Endothelial cell of umbilical vein (primary cell): ENCODE measurements at regions of chr15 and their contacts with region 1.

Region 1: DNA sequence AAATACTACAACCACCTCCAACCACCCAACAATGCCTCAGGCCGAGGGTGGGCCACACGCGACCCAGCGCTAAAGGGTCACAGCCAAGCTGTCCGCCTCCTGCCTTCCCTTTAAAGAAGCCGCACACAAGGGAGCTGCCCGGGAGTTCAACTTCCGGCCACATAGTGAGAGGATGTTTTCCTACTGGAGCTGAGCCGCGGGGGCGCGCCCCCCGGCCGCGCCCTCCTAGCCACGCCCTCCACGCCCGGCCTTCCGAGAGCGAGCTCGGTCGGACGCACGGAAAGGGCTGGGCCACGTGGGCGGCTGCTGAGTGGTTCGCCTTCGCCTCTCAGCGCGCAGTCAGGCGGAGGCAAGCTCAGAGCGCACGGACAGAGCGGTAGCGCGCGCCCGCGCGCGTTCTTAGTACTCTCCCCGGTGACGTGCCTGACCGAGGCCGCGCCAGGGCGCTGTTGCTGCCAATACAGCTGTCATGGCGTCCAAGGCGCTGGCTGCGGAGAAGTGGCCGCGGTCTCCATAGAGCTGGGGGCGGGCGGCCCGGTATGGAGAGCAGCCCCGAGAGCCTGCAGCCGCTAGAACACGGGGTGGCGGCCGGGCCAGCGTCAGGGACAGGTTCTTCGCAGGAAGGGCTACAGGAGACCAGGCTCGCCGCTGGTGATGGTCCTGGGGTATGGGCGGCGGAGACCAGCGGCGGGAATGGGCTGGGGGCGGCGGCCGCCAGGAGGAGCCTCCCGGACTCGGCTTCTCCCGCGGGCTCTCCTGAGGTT is at the start of gene MINDY2:
- DNase-seq: peak; percentile 99
- H3K4me3 ChIP-seq: peak within 1 kb of the TSS; percentile 62 to 82 (median 65)
- H3K27ac ChIP-seq: peak within 1 kb of the TSS; percentile 81
- H3K4me1 ChIP-seq: peaks cover 23% of the 10 kb centered on the region
- H3K27me3 ChIP-seq: no peaks in the 10 kb centered on the region
- CTCF ChIP-seq: peak; percentile 12 to 44
- POLR2A ChIP-seq: peak; percentile 71
- total RNA-seq, gene MINDY2: 11.4 and 13.7 TPM in 2 replicates

Region 2: DNA sequence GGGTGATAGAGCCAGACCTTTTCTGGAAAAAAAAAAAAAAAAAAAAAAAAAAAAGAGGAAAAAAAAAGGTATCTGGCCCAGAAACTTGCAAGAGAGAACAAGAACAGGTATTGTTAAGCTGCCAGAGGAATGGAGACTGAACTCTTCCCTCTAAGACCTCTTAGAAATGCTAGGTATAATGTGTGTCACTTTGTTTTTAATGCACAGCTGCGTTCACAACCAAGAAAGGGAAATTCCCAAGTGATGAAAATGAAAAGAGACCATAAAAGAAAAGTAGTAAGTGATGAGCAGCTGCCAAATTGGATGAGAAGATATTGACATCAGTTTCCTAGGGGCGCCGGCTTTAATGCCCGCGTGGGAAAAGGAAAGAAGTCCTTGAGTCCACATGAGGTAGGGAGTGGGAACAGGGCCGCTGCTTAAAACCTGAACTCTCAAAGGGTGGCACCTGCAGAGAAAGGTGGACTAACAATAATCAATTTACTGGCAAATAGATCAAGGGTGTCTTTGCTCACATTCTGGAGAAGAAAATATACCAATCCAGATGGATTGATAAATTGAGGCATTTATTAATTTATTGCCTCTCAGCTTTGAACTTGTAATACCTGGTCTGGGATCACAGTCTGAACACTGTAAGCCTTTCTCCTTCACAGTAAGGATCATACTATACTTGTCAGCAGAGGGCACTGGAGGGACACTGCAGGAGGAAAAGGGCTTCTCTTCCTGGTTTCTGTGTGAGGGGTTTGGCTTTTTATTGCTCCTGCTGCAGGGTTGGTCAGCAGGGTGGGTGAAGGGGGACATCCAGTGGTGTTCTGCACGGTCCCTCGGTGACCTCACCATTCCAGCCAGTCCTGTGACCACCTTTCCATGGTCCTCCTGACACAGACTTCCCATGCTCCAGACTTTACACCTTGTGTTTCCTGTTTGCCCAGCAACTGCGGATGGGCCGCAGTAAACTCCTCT is 501.3 kb before region 1 on chr15:
- CTCF ChIA-PET with region 1: interaction called, 11 read pairs
- POLR2A ChIA-PET with region 1: no interaction called
- dilution Hi-C with region 1: no loop called
- intact Hi-C with region 1: loop called (anchors 5 kb)
- DNase-seq: peak; percentile 56
- H3K4me3 ChIP-seq: no peak overlapping the region
- H3K27ac ChIP-seq: no peak overlapping the region
- H3K4me1 ChIP-seq: no peaks in the 10 kb centered on the region
- H3K27me3 ChIP-seq: peaks cover 0 to under 1% of the 10 kb centered on the region in 2 experiments
- CTCF ChIP-seq: peak; percentile 48 to 60
- POLR2A ChIP-seq: no peak

Region 3: DNA sequence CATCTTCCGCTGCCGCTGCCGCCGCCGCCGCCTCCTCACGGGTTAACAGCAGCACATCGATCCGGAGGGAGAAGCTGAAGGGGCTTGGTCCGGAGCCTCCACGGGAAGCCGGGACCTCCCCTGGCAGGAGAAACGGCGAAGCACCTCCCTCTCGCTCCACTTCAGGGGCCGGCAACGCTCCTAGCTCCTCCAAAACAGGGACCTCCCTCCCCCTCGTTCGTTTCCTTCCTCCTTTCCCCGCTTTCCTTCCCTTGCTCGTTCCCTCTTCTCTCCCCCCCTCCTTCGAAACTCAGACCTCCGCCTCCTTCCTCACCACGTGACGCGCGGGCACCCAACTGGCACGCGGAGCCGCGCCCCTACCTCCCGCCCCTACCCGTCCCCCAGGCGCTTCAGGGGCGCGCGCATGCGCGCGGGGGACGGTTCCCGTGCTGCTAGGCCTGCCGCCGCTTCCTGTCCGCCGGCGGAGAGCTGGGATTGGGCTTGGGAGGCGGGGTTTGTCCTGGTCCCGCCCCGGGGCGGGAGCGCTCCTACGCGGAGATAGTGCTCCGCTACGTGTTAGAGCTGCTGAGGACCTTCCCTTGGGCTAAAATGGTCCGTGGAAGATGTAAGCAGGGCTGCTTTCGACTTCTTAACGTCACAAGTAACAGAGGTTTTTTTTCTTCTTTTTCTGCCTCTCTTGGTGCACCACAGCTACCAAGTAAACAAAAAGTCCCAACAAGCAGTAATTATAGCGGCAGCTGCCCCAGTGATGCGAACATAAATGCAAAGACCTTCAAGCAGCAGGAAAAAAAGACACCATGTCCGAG is 21.3 kb before region 1 on chr15 and contains the start of gene ADAM10:
- CTCF ChIA-PET with region 1: interaction called, 30 read pairs
- POLR2A ChIA-PET with region 1: interaction called, 24 read pairs
- dilution Hi-C with region 1: no loop called
- intact Hi-C with region 1: loop called (anchors 1 kb)
- DNase-seq: peak; percentile 99
- H3K4me3 ChIP-seq: peak within 1 kb of the TSS; percentile 77 to 93 (median 92)
- H3K27ac ChIP-seq: peak within 1 kb of the TSS; percentile 90
- H3K4me1 ChIP-seq: peaks cover 24% of the 10 kb centered on the region
- H3K27me3 ChIP-seq: no peaks in the 10 kb centered on the region
- CTCF ChIP-seq: no peak
- POLR2A ChIP-seq: peak; percentile 71
- total RNA-seq, gene ADAM10: 185 and 203 TPM in 2 replicates

Region 4: GRCh38 chr15:58875343-58875742 is 104.3 kb after region 1 on chr15:
- CTCF ChIA-PET with region 1: interaction called, 3 read pairs
- POLR2A ChIA-PET with region 1: no interaction called
- dilution Hi-C with region 1: no loop called
- intact Hi-C with region 1: loop called (anchors 5 kb)
- DNase-seq: no peak
- H3K4me3 ChIP-seq: no peak overlapping the region
- H3K27ac ChIP-seq: no peak overlapping the region
- H3K4me1 ChIP-seq: no peaks in the 10 kb centered on the region
- H3K27me3 ChIP-seq: no peaks in the 10 kb centered on the region
- CTCF ChIP-seq: no peak
- POLR2A ChIP-seq: no peak

Region 5: DNA sequence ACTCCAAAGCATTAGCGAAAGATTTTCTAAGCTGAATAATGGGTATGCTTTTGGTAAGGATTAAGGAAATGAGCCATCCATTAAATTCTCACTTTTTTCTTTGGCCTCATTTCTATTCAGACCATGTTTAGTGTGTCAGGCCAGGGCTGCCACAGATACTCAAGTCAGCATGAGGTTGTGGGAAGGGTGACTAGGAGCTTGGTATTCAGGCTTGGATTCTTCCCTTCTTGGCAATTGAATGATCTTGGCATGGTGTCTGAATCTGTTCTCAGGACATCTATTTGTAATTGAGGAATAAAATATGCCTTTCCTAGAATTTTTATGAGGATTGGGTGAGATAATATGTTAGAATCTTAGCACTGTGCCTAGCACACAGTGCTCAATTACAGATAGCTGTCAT is 345.1 kb after region 1 on chr15:
- CTCF ChIA-PET with region 1: no interaction called
- POLR2A ChIA-PET with region 1: no interaction called
- dilution Hi-C with region 1: no loop called
- intact Hi-C with region 1: no loop called
- DNase-seq: no peak
- H3K4me3 ChIP-seq: no peak overlapping the region
- H3K27ac ChIP-seq: no peak overlapping the region
- H3K4me1 ChIP-seq: no peaks in the 10 kb centered on the region
- H3K27me3 ChIP-seq: no peaks in the 10 kb centered on the region
- CTCF ChIP-seq: no peak
- POLR2A ChIP-seq: no peak

Region 6: GRCh38 chr15:59501597-59501996 is 730.6 kb after region 1 on chr15:
- CTCF ChIA-PET with region 1: no interaction called
- POLR2A ChIA-PET with region 1: no interaction called
- dilution Hi-C with region 1: no loop called
- intact Hi-C with region 1: loop called (anchors 10 kb)
- DNase-seq: peak; percentile 72
- H3K4me3 ChIP-seq: no peak overlapping the region
- H3K27ac ChIP-seq: no peak overlapping the region
- H3K4me1 ChIP-seq: no peaks in the 10 kb centered on the region
- H3K27me3 ChIP-seq: peaks cover 4 to 6% of the 10 kb centered on the region in 2 experiments
- CTCF ChIP-seq: peak; percentile 54 to 66
- POLR2A ChIP-seq: no peak

Region 7: GRCh38 chr15:59825913-59826312 is 1054.9 kb after region 1 on chr15:
- CTCF ChIA-PET with region 1: no interaction called
- POLR2A ChIA-PET with region 1: no interaction called
- dilution Hi-C with region 1: no loop called
- intact Hi-C with region 1: no loop called
- DNase-seq: no peak
- H3K4me3 ChIP-seq: no peak overlapping the region
- H3K27ac ChIP-seq: no peak overlapping the region
- H3K4me1 ChIP-seq: no peaks in the 10 kb centered on the region
- H3K27me3 ChIP-seq: no peaks in the 10 kb centered on the region
- CTCF ChIP-seq: no peak
- POLR2A ChIP-seq: no peak